ENCODE measurements at regions of chrX and their contacts with region 1.

Region 1: GRCh38 chrX:41259516-41259915 is 74.4 kb upstream of the DDX3X start:
- H3K4me3 ChIP-seq: no peak overlapping the region
- H3K27ac ChIP-seq: no peak overlapping the region
- H3K4me1 ChIP-seq: no peaks in the 10 kb centered on the region
- CTCF ChIP-seq: no peak

Region 2: DNA sequence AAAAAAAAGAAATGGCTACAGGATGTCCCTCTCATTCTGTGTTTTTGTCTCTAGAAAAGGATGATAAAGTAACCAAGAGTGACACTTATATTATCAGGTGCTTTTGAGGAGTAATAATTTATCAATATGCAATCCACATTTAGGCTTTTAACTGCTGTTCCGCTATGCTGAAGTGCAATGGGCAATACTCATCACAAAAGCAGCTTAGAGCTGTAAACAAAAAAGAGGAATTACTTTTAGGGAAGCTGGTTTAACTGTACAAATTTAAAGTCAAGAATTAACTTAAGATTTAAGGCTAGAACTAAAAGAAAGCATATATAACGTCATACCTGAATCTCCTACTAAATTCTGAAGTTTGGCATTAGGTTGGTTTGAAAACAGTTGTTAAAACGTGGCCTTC is 19.0 kb before region 1 on chrX:
- CTCF ChIA-PET with region 1: interaction called, 23 read pairs
- POLR2A ChIA-PET with region 1: no interaction called
- H3K4me3 ChIP-seq: no peak overlapping the region
- H3K27ac ChIP-seq: no peak overlapping the region
- H3K4me1 ChIP-seq: no peaks in the 10 kb centered on the region; the same call in 1 of the 2 replicates
- CTCF ChIP-seq: no peak

Measured in HEK293 (cell line).